T-cell (primary cell): ENCODE measurements at regions of chr11 and their contacts with region 1.

Region 1: DNA sequence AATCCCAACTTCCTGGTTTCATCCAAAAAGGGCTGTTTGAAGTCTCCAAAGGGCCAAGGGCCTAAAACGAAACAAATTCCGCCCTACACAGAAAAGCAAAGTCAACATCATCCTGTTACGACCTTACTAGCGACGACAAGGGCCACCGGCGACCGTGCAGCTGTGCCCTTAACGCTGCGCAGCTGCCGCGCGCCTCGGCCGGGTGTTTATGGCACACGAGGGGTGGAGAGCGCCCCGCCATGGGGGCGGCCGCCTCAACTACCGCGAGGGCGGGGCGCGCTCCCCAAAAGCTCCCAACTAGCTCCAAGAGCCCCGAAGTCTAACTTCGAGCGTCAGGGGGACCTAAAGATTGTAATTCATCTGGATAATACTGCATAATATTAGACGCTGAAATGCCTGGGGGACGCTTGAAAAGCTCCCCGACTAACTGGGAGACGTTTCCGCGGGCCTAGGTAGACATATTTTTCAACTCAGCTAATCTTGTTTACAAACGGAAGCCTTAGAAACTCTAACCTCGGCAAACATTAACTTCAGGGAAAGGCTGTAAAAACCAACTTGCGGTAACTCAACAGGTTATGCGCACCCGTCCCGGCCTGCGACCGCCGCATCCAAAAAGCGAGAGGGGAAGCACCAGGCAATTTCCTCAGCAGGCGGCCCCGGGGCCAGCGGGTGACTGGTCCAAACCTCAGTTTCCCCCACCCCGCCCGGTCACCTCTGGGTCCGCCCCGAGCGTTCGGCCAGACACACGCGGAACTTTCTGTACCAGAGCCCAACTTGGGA is 694 bp downstream of the TMEM123 start:
- DNase-seq: peak; percentile 57 to 86 (median 78)
- ATAC-seq: peak; percentile 54 to 67 (median 60)
- H3K4me3 ChIP-seq: peak overlapping the region; percentile 72 to 95
- H3K4me3 Mint-ChIP-seq: peak overlapping the region; percentile 96 to 99 (median 96)
- H3K27ac ChIP-seq: peak overlapping the region; percentile 79
- H3K27ac Mint-ChIP-seq: peak overlapping the region; percentile 89 to 95
- H3K4me1 ChIP-seq: peaks cover 36 to 55% of the 10 kb centered on the region in 2 experiments
- H3K4me1 Mint-ChIP-seq: peaks cover 72 to 84% (median 74%) of the 10 kb centered on the region in 3 donors
- H3K27me3 ChIP-seq: no peaks in the 10 kb centered on the region
- H3K27me3 Mint-ChIP-seq: no peaks in the 10 kb centered on the region

Region 2: GRCh38 chr11:102323542-102324251 is 128.2 kb before region 1 on chr11:
- CTCF ChIA-PET with region 1: no interaction called
- POLR2A ChIA-PET with region 1: interaction called in 1 of 2 experiments, 13 read pairs
- DNase-seq: no peak
- ATAC-seq: no peak
- H3K4me3 ChIP-seq: no peak overlapping the region
- H3K4me3 Mint-ChIP-seq: no peak overlapping the region
- H3K27ac ChIP-seq: peak overlapping the region; percentile 54
- H3K27ac Mint-ChIP-seq: peak overlapping the region; percentile 52 to 57
- H3K4me1 ChIP-seq: peaks cover 20 to 32% of the 10 kb centered on the region in 2 experiments
- H3K4me1 Mint-ChIP-seq: peaks cover 53 to 71% (median 61%) of the 10 kb centered on the region in 3 donors
- H3K27me3 ChIP-seq: no peaks in the 10 kb centered on the region
- H3K27me3 Mint-ChIP-seq: no peaks in the 10 kb centered on the region

Region 3: DNA sequence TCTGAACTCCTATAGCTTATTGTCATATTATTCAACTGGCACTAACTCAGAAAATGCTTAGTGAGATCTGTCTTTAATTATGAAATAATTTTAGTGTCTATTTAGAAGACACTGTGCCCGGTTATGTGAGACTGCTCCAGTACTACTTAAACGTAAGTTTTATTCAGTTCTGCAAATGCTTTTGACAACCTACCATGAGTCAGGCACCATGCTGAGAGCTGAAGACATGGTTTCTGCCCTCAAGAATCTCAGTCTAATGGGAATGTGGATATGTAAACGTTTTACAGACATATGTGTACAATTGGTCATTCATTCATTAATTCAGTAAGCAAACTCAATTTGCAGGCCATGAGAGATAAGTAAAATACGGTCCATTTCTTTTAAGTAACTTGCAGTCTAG is 600.1 kb after region 1 on chr11:
- CTCF ChIA-PET with region 1: no interaction called
- POLR2A ChIA-PET with region 1: no interaction called
- DNase-seq: no peak
- ATAC-seq: no peak
- H3K4me3 ChIP-seq: no peak overlapping the region
- H3K4me3 Mint-ChIP-seq: no peak overlapping the region
- H3K27ac ChIP-seq: no peak overlapping the region
- H3K27ac Mint-ChIP-seq: no peak overlapping the region
- H3K4me1 ChIP-seq: no peaks in the 10 kb centered on the region
- H3K4me1 Mint-ChIP-seq: no peaks in the 10 kb centered on the region
- H3K27me3 ChIP-seq: no peaks in the 10 kb centered on the region
- H3K27me3 Mint-ChIP-seq: peaks cover 0 to 4% of the 10 kb centered on the region in 2 donors